A673 (cell line): ENCODE measurements at regions of chr5 and their contacts with region 1.

Region 1: DNA sequence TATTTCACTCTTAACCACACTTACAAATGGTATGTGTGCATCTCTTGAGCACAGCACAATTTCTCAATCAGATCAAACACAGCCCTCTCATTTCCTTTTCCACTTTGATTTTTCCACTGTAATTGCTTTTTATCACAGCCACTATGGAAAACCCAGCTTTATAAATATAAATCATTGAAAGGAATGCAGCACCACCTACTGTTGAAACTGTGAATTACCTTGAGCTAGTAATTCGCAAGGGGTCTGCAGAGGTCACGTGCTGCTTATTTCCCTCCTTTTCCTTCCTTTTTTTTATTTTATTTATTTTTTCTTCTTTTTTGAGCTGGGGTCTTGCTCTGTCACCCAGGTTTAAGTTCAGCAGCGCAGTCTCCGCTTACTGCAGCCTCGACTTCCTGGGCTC is 76.9 kb downstream of the CDH6 start:
- DNase-seq: peak; percentile 61
- H3K4me3 ChIP-seq: no peak overlapping the region
- H3K27ac ChIP-seq: no peak overlapping the region
- H3K4me1 ChIP-seq: peaks cover 11% of the 10 kb centered on the region
- H3K27me3 ChIP-seq: no peaks in the 10 kb centered on the region
- CTCF ChIP-seq: peak; percentile 77

Region 2: GRCh38 chr5:30447431-30447830 is 823.0 kb before region 1 on chr5:
- CTCF ChIA-PET with region 1: interaction called, 12 read pairs
- POLR2A ChIA-PET with region 1: no interaction called
- intact Hi-C with region 1: no loop called
- DNase-seq: no peak
- H3K4me3 ChIP-seq: no peak overlapping the region
- H3K27ac ChIP-seq: no peak overlapping the region
- H3K4me1 ChIP-seq: no peaks in the 10 kb centered on the region
- H3K27me3 ChIP-seq: no peaks in the 10 kb centered on the region
- CTCF ChIP-seq: no peak

Region 3: DNA sequence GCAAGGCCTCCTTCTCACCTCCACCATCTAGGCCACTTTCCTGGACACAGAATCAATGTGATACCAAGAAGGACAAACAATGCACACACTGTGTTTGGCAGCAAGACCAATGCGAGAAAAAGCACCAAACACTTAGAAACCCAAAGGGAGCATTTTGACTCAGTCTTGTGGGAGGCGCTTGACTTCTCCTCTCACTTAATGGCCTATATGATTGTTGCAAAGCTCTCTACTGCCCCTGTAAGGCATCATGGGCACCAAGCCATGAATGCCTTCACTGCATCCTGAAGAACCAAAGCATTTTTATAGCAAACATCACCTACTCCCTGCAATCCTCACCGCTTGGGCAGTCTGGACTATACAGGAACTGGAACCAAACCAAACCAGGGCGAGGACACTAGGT is 19.4 kb before region 1 on chr5:
- CTCF ChIA-PET with region 1: no interaction called
- POLR2A ChIA-PET with region 1: no interaction called
- intact Hi-C with region 1: no loop called
- DNase-seq: no peak
- H3K4me3 ChIP-seq: no peak overlapping the region
- H3K27ac ChIP-seq: no peak overlapping the region
- H3K4me1 ChIP-seq: peaks cover 5% of the 10 kb centered on the region
- H3K27me3 ChIP-seq: no peaks in the 10 kb centered on the region
- CTCF ChIP-seq: 0 out of 2 replicates have a peak, but pooled peaks have one; percentile 34

Region 4: GRCh38 chr5:31753700-31754357 is 483.4 kb after region 1 on chr5:
- CTCF ChIA-PET with region 1: no interaction called
- POLR2A ChIA-PET with region 1: no interaction called
- intact Hi-C with region 1: no loop called
- DNase-seq: no peak
- H3K4me3 ChIP-seq: no peak overlapping the region
- H3K27ac ChIP-seq: no peak overlapping the region
- H3K4me1 ChIP-seq: no peaks in the 10 kb centered on the region
- H3K27me3 ChIP-seq: no peaks in the 10 kb centered on the region
- CTCF ChIP-seq: no peak

Region 5: DNA sequence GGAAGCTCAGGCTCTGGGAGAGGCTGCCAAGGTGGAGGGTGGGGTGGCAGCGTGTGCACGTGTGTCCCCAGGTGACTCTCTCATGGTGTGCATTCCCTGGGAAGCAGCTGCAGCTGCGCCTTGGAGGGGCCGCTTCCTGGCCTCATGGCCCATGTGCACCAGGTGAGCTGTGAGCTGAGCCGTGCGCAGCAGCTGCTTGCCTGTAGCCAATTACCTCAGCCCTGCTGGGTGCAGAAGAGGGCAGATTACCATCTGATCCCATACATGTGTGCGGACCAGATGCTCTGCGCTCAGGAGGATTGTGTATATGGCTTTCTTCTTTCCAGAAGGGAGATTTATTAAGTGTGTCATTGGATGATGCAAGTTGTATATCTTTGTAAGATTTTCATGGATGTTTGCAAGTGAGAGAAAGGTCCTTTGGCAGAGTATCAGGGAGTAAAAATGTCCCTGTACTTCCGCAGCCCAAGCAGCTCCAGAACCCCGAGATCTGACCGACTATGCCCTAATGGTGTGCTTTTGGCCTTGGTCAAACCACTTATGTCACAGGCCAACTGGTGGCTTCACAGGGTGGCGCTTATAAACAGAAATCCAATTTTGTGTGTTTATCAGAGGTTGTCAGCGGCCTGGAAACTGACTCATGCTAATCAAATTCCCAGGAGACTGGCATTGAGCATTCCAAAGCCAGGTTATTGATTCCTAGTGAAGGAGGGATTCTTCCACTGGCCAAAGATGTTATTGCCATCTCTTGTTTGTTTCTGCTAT is 674.5 kb after region 1 on chr5:
- CTCF ChIA-PET with region 1: no interaction called
- POLR2A ChIA-PET with region 1: no interaction called
- intact Hi-C with region 1: no loop called
- DNase-seq: no peak
- H3K4me3 ChIP-seq: no peak overlapping the region
- H3K27ac ChIP-seq: no peak overlapping the region
- H3K4me1 ChIP-seq: no peaks in the 10 kb centered on the region
- H3K27me3 ChIP-seq: no peaks in the 10 kb centered on the region
- CTCF ChIP-seq: no peak